HepG2 (cell line): ENCODE measurements at regions of chr12 and their contacts with region 1.

Region 1: DNA sequence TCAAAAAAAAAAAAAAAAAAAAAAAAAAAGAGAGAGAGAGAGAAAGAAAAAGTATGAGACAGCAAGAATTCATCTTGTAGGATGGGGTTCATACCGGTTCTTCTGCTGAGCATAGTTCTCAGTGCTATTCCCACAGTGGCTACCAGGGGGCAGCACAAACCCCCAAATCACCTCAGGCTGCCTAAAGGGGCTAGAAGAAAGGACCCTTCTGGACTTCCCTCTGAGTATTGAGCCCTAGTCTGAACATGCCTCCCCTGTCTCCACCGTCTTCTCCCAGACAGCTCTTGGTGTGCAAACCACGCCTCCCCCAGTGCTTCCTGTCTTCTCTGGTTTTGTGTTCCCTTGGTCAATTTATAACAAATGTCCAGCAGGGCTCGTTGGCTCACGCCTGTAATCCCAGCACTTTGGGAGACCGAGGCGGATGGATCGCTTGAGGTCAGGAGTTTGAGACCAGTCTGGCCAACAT is 31.3 kb upstream of the SMUG1 start:
- DNase-seq: peak; percentile 45
- ATAC-seq: peak; percentile 76
- H3K4me3 ChIP-seq: no peak overlapping the region
- H3K27ac ChIP-seq: no peak overlapping the region
- H3K4me1 ChIP-seq: peaks cover 32% of the 10 kb centered on the region
- H3K27me3 ChIP-seq: peaks cover 2 to 26% of the 10 kb centered on the region in 2 experiments
- CTCF ChIP-seq: peak; percentile 87
- EP300 ChIP-seq: no peak
- POLR2A ChIP-seq: no peak
- RAD21 ChIP-seq: no peak; the same call in 1 of the 2 replicates

Region 2: GRCh38 chr12:53844989-53845844 is 374.9 kb before region 1 on chr12:
- CTCF ChIA-PET with region 1: no interaction called
- POLR2A ChIA-PET with region 1: no interaction called
- in situ Hi-C with region 1: no loop called
- intact Hi-C with region 1: no loop called
- DNase-seq: no peak
- ATAC-seq: no peak
- H3K4me3 ChIP-seq: no peak overlapping the region
- H3K27ac ChIP-seq: no peak overlapping the region
- H3K4me1 ChIP-seq: no peaks in the 10 kb centered on the region
- H3K27me3 ChIP-seq: peaks cover 0 to 44% of the 10 kb centered on the region in 2 experiments; a peak in 4 of 5 replicates
- CTCF ChIP-seq: no peak
- EP300 ChIP-seq: no peak
- POLR2A ChIP-seq: no peak
- RAD21 ChIP-seq: no peak

Region 3: DNA sequence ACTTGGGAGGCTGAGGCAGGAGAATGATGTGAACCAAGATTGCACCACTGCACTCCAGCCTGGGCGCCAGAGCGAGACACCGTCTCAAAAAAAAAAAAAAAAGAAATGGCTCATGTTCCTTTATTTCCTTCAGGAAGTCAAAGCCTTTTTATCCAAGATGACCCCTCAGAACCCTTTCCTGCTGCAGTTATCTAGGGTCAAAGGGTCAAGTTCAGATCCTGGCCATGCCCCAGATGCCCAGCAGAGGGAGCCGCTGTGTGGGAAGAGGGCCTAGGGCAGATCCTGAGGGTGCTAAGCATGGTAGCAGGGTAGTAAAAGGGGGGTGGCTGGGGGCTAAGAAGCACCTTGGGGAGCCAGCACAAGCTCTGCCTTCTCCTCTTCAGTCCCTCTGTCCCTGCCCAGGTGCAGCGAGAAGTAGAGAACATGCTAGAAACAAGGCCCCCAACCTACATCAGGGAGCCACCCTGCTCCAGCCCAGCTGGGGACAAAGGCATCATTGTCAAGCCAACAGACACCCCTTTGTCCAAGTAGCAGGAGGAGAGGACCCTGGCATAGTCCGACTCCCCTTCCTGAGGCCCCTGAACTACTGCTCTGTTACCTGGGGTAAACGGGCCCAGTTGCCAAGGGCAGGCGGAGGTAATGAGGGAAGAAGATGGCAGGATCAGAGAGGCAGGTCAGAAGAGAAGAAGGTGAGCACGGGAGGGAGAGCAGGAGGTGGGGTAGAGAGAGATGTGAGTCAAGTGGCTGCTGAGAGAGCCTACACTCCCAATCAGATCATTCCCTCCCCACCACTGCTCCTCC is 74.2 kb after region 1 on chr12:
- CTCF ChIA-PET with region 1: no interaction called
- POLR2A ChIA-PET with region 1: no interaction called
- in situ Hi-C with region 1: no loop called
- intact Hi-C with region 1: loop called (anchors 1 kb)
- DNase-seq: peak; percentile 89
- ATAC-seq: peak; percentile 60
- H3K4me3 ChIP-seq: peak overlapping the region in 2 of 3 experiments; percentile 26 to 64; a peak in 3 of 6 replicates
- H3K27ac ChIP-seq: peak overlapping the region; percentile 89
- H3K4me1 ChIP-seq: peaks cover 57% of the 10 kb centered on the region
- H3K27me3 ChIP-seq: no peaks in the 10 kb centered on the region
- CTCF ChIP-seq: peak; percentile 93
- EP300 ChIP-seq: peak; percentile 45 to 70; a peak in 3 of 4 replicates
- POLR2A ChIP-seq: peak; percentile 22 to 36; a peak in 2 of 4 replicates
- RAD21 ChIP-seq: peak; percentile 84